Gastrocnemius medialis (tissue), 4 donors: ENCODE measurements at regions of chr18 and their contacts with region 1.

Region 1: GRCh38 chr18:58402247-58402646 is 226.6 kb downstream of the ALPK2 start:
- DNase-seq: no peak
- ATAC-seq: no peak
- H3K4me3 ChIP-seq: no peak overlapping the region
- H3K27ac ChIP-seq: no peak overlapping the region
- H3K4me1 ChIP-seq: peaks cover 0 to 16% of the 10 kb centered on the region in 2 donors
- H3K27me3 ChIP-seq: no peaks in the 10 kb centered on the region
- CTCF ChIP-seq: peak in 2 of 5 experiments; percentile 7 to 18
- POLR2A ChIP-seq: no peak

Region 2: DNA sequence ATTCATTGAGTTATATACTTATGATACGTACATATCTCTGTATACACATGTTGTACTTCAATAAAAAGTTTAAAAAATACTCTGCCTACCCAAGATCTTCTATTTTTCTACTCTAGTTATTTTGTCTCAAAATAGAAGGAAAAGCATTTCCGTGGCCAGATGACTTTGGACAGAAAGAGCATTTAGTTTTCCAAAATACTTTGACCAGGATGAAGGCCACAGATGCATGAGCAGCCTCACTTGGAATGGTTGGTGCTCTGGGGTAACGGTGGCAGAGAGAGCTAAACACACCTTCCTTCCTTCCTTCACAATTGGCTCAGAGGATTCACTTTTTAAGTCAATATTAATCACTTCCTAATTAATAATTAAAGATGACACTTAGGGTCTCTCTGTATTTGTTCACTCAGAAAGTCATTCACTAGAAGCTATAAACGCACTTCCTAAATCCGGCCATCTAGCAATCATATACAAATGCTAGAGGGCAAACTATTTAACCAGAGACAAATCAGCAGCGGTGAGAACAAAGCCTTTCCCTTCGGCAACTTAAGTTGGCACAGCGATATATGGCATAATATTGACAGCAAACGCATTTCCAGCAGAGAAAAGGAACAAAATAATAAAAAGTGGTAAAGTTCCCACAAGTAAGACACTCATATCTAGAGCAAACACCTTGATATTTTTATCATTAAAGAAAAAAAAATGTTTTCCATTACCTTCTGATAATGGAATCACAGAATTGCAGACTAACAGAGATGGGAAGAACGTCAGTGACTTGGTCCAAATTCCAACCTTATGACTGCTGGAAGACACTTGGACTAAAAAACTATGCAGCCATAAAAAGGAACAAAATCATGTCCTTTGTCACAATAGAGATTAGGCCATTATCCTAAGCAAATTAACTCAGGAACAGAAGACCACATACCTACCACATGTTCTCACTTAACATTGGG is 724.7 kb before region 1 on chr18:
- in situ Hi-C with region 1: no loop called
- intact Hi-C with region 1: no loop called
- DNase-seq: no peak
- ATAC-seq: no peak
- H3K4me3 ChIP-seq: no peak overlapping the region
- H3K27ac ChIP-seq: no peak overlapping the region
- H3K4me1 ChIP-seq: no peaks in the 10 kb centered on the region
- H3K27me3 ChIP-seq: no peaks in the 10 kb centered on the region
- CTCF ChIP-seq: no peak
- POLR2A ChIP-seq: no peak

Region 3: DNA sequence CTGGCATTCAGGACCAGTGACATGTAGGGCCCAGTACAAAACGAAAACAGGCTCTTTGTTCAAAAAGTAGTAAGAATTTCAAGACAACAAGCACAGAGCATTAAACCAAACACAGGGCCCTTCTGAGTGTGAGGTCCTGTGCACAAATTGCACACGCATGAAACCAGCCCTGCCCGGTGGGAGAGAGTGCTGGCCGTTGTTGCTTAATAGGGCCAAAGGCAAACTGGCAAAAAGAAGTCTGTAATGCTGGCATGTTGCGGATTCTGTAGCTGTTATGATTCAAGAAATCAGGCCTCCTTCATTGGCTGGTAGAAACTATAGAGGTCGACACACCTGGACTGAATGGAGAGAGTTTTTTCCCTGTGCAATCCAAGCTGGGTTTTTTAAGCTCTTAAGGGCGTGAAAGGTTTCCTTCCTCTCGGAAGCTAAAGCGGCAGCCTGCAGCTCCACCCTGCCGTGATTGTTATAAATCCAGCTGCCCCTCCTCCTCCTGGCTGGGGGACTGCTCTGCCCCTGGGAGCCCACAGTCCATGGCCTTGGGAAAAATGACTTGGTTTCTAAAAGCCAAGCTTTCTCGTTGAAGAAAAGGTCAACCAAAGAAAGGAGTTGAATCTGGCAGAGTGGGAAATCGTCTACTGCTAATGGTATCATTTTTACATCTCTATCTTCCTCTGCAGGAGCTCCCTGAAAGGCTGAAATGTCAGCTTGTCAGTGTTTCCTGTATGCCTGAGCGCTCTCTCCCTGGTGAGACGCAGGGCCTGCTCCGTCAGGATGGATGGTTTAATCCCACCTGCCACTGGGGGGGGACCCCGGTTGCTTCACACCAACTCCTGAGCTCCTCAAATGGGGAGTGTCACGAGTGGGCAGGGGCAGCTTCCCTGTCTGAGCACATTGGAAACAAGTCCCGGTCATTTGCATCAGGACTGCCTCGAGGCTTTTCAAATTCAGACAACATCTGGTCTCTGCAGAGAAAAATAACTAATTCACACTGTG is 83.0 kb after region 1 on chr18:
- in situ Hi-C with region 1: loop called (anchors 5 to 10 kb)
- intact Hi-C with region 1: no loop called
- DNase-seq: no peak
- ATAC-seq: no peak
- H3K4me3 ChIP-seq: no peak overlapping the region
- H3K27ac ChIP-seq: no peak overlapping the region
- H3K4me1 ChIP-seq: no peaks in the 10 kb centered on the region
- H3K27me3 ChIP-seq: no peaks in the 10 kb centered on the region
- CTCF ChIP-seq: no peak
- POLR2A ChIP-seq: no peak

Region 4: GRCh38 chr18:58761241-58761969 is 359.2 kb after region 1 on chr18:
- in situ Hi-C with region 1: no loop called
- intact Hi-C with region 1: loop called (anchors 5 kb)
- DNase-seq: peak; percentile 61 to 63
- ATAC-seq: peak; percentile 82 to 89
- H3K4me3 ChIP-seq: no peak overlapping the region
- H3K27ac ChIP-seq: peak overlapping the region; percentile 63 to 83 (median 70)
- H3K4me1 ChIP-seq: peaks cover 14 to 19% of the 10 kb centered on the region in 2 donors
- H3K27me3 ChIP-seq: no peaks in the 10 kb centered on the region
- CTCF ChIP-seq: no peak
- POLR2A ChIP-seq: no peak